ENCODE measurements at regions of chr15 and their contacts with region 1.

Region 1: DNA sequence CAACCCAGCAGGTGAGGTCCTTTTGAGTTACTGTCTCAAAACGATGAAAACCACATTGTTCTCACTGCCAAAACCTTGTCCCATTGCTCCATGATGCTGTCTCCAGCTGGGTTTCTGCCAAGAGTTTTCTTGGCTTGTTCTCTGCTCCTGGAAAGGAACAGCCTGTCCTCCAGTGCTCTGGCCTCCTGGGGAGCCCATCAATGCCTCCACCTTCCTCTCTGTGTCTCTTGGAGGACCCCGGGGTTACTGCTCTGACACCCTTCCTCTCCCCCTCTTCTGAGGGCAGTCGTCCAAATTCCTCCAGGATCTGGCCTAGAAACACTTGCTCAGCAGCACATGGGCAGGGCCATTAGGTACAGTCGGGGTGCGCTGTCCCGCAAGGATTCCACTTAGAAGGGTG is 63.9 kb upstream of the RGMA start:
- DNase-seq: no peak
- ATAC-seq: no peak
- H3K4me3 ChIP-seq: no peak overlapping the region
- H3K4me3 Mint-ChIP-seq: no peak overlapping the region
- H3K27ac ChIP-seq: no peak overlapping the region
- H3K27ac Mint-ChIP-seq: no peak overlapping the region
- H3K4me1 ChIP-seq: peaks cover 11% of the 10 kb centered on the region
- H3K4me1 Mint-ChIP-seq: peaks cover 20% of the 10 kb centered on the region
- H3K27me3 ChIP-seq: peaks cover 0 to 5% of the 10 kb centered on the region in 2 experiments
- H3K27me3 Mint-ChIP-seq: peaks cover 6% of the 10 kb centered on the region
- CTCF ChIP-seq: no peak

Region 2: DNA sequence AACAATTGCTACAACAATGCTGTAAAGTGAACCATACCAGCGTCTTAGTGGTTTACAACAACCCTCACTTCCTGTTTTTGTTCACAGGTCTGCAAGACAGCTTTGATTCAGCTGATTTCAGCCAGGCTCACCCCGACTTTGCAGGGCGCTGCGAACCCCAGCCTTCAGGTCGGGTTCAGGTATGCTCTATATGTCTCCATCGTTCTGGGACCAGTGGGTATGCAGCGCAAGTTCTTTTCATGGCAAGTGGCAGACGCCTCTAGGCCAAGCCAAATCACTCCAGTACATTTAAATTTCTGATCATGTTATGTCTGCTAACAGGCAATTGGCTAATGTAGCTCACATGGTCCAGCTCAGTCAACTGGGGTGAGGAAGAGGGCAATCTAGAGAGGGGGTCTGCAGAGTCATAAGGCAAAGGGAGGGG is 11.6 kb before region 1 on chr15:
- CTCF ChIA-PET with region 1: interaction called, 3 read pairs
- POLR2A ChIA-PET with region 1: no interaction called
- intact Hi-C with region 1: loop called in 1 of 2 experiments (anchors 1 kb)
- DNase-seq: peak; percentile 10 to 78 (median 52)
- ATAC-seq: peak; percentile 91
- H3K4me3 ChIP-seq: peak overlapping the region in 1 of 2 experiments; percentile 23
- H3K4me3 Mint-ChIP-seq: peak overlapping the region; percentile 56
- H3K27ac ChIP-seq: no peak overlapping the region
- H3K27ac Mint-ChIP-seq: peak overlapping the region; percentile 85
- H3K4me1 ChIP-seq: no peaks in the 10 kb centered on the region
- H3K4me1 Mint-ChIP-seq: peaks cover 26% of the 10 kb centered on the region
- H3K27me3 ChIP-seq: peaks cover 0 to 2% of the 10 kb centered on the region in 2 experiments
- H3K27me3 Mint-ChIP-seq: no peaks in the 10 kb centered on the region
- CTCF ChIP-seq: no peak

Measured in CD8-positive, alpha-beta T cell (primary cell).